HepG2 (cell line): ENCODE measurements at regions of chr7 and their contacts with region 1.

Region 1: GRCh38 chr7:1432411-1433082 is 26.7 kb downstream of the MICALL2 start:
- DNase-seq: peak; percentile 35
- ATAC-seq: peak; percentile 67
- H3K4me3 ChIP-seq: peak overlapping the region in 1 of 3 experiments; percentile 23; a peak in 1 of 6 replicates
- H3K27ac ChIP-seq: no peak overlapping the region
- H3K4me1 ChIP-seq: peaks cover 47% of the 10 kb centered on the region
- H3K27me3 ChIP-seq: peaks cover 3 to 10% of the 10 kb centered on the region in 2 experiments; a peak in 1 of 5 replicates
- CTCF ChIP-seq: peak; percentile 92
- EP300 ChIP-seq: no peak
- POLR2A ChIP-seq: no peak
- RAD21 ChIP-seq: peak; percentile 72

Region 2: DNA sequence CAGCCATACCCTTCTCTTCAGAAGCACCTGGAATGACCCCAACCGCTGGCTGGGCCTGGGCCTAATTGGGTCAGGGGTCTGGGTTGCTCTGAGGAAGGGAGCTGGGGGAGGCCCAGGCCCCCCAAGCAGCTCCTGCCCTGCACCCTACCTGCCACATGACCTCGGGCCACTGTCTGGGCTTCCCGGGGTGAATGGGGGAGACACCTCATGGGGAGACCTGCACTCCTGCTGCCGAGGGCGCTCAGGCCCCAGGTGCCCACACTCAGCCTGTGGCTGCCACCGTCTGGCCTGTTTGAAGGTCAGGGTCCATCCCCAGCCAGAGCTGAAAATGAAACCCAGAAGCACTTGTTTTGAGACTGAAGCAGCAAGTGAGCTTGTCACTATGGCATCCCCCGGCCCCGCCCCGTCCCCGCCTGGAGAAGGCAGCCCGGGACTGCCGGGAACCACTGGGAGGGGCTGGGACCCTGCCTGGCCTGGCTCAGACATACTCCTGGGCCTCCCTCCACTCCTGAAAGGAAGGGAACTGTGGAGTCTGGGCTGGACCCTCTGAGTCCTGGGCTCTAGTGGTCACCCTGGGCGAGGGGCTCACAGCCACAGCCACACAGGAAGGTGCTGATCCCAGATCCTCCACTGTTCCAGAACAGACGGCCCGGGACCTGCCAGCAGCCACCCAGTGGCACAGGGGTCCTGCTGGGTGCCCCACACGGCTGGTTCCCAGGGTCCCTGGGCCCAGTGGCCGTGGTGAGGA is 34.2 kb after region 1 on chr7:
- CTCF ChIA-PET with region 1: no interaction called
- POLR2A ChIA-PET with region 1: interaction called, 15 read pairs
- in situ Hi-C with region 1: loop called (anchors 5 kb)
- intact Hi-C with region 1: no loop called
- DNase-seq: peak; percentile 93
- ATAC-seq: peak; percentile 88
- H3K4me3 ChIP-seq: peak overlapping the region; percentile 34 to 65 (median 49)
- H3K27ac ChIP-seq: peak overlapping the region; percentile 77
- H3K4me1 ChIP-seq: peaks cover 43% of the 10 kb centered on the region
- H3K27me3 ChIP-seq: no peaks in the 10 kb centered on the region
- CTCF ChIP-seq: peak; percentile 92
- EP300 ChIP-seq: no peak
- POLR2A ChIP-seq: peak in 1 of 2 experiments; percentile 79; a peak in 2 of 4 replicates
- RAD21 ChIP-seq: no peak

Region 3: GRCh38 chr7:1611708-1612241 is 179.2 kb after region 1 on chr7:
- CTCF ChIA-PET with region 1: no interaction called
- POLR2A ChIA-PET with region 1: no interaction called
- in situ Hi-C with region 1: no loop called
- intact Hi-C with region 1: no loop called
- DNase-seq: no peak
- ATAC-seq: no peak
- H3K4me3 ChIP-seq: no peak overlapping the region
- H3K27ac ChIP-seq: no peak overlapping the region
- H3K4me1 ChIP-seq: 0 out of 2 replicates have a peak, but pooled peaks cover 7% of the 10 kb centered on the region
- H3K27me3 ChIP-seq: peaks cover 8 to 27% of the 10 kb centered on the region in 2 experiments; a peak in 4 of 5 replicates
- CTCF ChIP-seq: no peak
- EP300 ChIP-seq: no peak
- POLR2A ChIP-seq: no peak
- RAD21 ChIP-seq: no peak